ENCODE measurements at regions of chr18 and their contacts with region 1.

Region 1: GRCh38 chr18:35343936-35344735 is at the start of gene ZNF24:
- DNase-seq: peak; percentile 97 to 99 (median 99)
- ATAC-seq: peak; percentile 99
- H3K4me3 ChIP-seq: peak within 1 kb of the TSS; percentile 92
- H3K27ac ChIP-seq: peak within 1 kb of the TSS; percentile 100
- H3K4me1 ChIP-seq: no peaks in the 10 kb centered on the region
- H3K27me3 ChIP-seq: no peaks in the 10 kb centered on the region
- total RNA-seq, gene ZNF24: 47.3 to 56.5 (median 51.8) TPM

Region 2: GRCh38 chr18:35005963-35006577 is 338.1 kb before region 1 on chr18:
- intact Hi-C with region 1: loop called in 1 of 4 experiments (anchors 10 kb)
- DNase-seq: no peak
- ATAC-seq: peak; percentile 87 to 92
- H3K4me3 ChIP-seq: no peak overlapping the region
- H3K27ac ChIP-seq: no peak overlapping the region
- H3K4me1 ChIP-seq: no peaks in the 10 kb centered on the region
- H3K27me3 ChIP-seq: no peaks in the 10 kb centered on the region

Region 3: DNA sequence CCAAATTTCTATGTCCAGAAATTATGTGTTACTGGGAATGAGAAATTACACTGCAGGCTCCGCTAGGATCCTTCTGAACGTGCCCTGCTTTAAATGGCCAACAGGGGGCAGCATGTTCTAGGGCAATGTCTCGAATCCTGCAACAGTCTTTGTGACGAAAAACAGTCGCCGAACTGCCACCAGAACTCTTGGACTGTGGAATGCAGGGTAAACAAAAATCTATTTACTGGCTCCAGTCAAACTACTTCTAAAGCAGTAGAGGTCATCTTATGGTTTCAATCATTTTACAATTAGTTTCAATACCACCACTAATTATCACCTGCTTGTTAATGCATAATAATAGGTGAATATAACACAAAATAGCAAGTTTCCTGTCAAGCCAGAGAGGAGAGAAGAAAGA is 113.1 kb before region 1 on chr18:
- intact Hi-C with region 1: loop called in 1 of 4 experiments (anchors 10 kb)
- DNase-seq: peak; percentile 78 to 90 (median 86)
- ATAC-seq: peak; percentile 86 to 90
- H3K4me3 ChIP-seq: peak overlapping the region; percentile 40
- H3K27ac ChIP-seq: no peak overlapping the region
- H3K4me1 ChIP-seq: no peaks in the 10 kb centered on the region
- H3K27me3 ChIP-seq: no peaks in the 10 kb centered on the region

Region 4: DNA sequence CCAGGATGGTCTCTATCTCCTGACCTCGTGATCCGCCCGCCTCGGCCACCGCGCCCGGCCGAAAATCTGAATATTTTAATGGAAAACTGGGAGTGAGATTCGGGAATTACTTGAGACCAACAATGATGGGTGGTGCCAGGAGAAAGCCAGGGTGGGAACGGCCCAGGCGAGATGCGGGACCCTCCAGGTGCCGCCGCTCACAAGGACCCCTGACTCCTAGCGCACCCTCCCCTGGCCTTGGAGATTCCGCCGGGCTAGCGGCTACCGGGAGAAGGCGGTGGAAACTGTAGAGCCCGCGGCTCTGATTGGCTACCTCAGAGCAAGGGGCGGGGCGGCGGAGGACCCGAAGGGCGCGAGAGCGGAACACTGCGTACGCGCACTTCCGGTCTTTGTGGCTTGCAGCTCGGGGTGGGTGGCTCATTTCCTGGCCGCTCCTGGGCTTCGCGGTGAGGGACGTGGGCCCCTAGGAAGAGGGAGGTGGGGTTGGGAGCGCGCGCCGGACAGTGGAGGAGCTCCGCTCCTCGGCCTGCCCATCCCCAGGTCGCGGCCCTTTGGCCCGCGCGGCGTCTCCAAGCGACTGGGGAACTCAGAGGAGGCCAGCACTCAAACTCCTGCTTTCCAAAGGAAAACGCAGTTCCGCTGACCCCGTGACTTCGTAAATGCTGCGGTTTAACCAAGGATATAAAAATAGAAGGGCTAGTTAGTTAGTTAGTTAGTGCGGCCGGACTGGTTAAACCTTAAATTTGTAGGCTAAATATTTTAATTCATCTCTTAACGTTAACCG is 103.3 kb before region 1 on chr18 and contains the start of gene ZNF397:
- intact Hi-C with region 1: loop called in 2 of 4 experiments (anchors 5 to 10 kb)
- DNase-seq: peak; percentile 99 to 100 (median 99)
- ATAC-seq: peak; percentile 100
- H3K4me3 ChIP-seq: peak within 1 kb of the TSS; percentile 87
- H3K27ac ChIP-seq: peak within 1 kb of the TSS; percentile 99
- H3K4me1 ChIP-seq: no peaks in the 10 kb centered on the region
- H3K27me3 ChIP-seq: no peaks in the 10 kb centered on the region
- total RNA-seq, gene ZNF397: 18.6 to 21.8 (median 19.4) TPM